GM10248 (cell line): ENCODE measurements at regions of chr10 and their contacts with region 1.

Region 1: DNA sequence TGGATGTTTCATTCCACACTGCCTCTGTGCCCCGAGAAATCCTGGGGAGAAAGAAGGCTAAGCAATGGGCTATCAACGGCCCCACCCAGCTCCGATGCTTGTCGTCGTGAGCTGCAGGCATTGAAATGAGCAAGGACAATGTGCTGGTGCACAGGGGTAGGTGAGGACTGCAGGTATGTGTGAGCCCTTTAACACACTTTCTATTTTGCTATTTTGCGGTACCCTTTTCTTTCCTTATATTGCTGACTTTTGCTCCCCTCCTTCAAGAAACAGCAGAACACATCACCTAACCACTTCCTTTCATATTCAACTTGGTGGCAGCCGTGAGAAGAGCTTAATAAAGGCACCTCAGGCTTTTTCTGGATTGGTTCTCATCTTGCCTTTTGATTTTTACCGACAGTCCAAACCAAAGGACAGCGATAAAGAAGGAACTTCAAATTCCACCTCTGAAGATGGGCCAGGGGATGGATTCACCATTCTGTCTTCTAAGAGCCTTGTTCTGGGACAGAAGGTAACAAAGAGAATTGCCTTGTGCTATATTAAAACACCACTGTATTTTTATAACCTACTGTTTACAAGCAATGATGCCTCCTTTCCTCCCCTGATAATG is 39.2 kb downstream of the AIFM2 start:
- DNase-seq: no peak
- CTCF ChIP-seq: no peak

Region 2: DNA sequence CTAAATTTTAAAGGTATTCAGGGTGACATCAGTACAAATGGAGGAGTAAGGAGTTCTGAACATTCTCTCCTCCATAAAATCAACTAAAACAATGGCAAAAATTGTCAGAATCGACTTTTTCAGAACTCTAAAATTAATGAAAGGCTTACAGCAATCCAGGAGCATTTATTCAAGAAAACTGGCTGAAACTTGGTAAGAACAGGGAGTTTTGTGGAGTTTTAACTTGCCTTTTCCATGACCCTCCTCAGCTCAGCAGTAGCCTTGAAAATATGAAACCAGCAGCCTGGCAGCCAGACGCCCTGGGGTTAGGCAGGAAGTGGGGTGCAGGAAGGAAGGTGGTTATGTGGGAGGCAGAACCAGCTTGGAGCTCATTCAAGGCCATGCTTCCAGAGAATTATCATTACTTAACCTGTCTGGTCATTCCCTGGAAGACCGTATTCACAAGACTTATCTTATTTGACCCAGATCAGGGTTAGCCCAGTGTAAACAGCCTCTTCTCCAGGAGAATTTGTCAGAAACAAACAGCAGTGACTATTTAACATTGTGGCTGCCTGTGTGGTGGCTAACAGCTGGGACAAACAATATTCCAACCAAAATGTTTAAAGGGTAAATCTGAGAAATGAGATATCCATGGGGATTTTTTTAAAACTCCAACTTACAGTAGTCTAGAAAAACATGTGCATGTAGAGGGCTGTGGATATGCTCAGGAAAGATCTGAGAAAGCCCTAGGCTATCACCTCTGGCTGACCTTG is 116.5 kb before region 1 on chr10:
- CTCF ChIA-PET with region 1: no interaction called
- POLR2A ChIA-PET with region 1: no interaction called
- DNase-seq: no peak
- CTCF ChIP-seq: no peak

Region 3: DNA sequence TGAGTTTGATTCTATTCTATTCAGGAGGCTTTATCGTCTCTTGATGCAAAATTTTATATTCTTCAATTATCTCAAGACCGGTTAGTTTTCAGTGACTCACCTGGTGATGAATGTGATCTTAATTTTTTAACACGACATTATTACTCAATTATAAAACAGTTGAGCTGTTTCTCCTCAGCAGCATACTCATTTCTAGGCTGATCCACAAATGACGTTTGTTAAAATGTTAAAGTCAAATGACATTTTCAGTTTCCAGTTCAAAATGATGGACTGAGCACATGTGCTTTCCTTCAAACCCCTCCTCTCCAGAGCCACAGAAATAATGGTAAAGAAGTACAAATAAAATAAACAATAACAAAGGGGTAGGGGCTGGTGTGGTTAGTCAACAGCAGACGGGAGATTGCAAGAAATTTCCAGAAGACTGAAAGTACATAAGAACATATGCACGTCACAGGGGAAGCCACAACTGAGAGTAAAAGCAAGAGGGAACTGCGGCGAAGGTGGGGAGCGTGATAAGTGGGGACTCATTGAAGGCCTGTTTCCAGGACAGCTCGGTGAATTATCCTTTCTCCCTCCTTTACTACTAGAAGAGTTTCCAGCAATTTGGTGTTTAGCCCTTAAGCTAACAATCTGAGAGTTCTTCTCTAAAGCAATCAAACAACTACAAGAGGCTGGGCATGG is 29.9 kb before region 1 on chr10:
- CTCF ChIA-PET with region 1: no interaction called
- POLR2A ChIA-PET with region 1: no interaction called
- DNase-seq: no peak
- CTCF ChIP-seq: no peak

Region 4: DNA sequence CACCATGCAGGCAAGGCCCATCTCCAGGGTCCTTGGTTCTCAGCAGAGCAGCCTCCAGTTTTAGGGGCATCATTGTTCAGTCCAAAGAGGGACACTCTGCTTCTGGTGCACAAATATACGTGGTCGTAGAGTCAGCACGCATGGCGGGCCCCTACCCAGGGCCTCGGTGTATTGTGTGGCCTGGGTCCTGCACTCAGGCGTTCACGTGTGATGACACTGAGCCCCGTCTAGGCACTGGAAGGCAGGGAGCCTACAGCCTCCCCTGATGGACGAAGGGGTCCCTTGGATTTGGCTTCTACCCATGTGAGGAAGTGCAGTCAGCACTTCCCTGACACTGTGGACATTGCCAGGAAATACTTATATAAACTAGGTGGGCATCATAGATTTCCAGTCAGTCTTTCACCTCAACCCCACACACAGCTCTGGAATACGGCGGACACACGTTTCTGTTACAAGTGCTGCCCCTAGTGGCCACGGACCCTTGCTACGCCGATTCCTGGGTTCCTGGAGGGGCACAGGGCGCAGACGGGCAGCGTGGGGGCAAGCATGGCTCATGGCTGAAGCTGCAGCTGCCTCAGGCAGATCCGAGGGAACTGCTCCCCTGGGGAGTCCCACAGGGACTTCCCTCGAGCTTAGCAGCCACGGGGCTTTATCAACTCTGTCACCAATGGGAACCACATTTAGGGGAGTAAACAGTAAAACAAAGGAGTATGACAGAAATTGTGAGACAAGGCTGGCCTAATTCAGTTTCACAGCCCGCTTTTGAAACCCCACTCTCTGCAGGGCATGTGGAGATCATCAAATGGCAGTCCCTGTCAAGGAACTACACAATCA is 13.7 kb after region 1 on chr10:
- CTCF ChIA-PET with region 1: interaction called, 39 read pairs
- POLR2A ChIA-PET with region 1: no interaction called
- DNase-seq: peak; percentile 69
- CTCF ChIP-seq: peak; percentile 55

Region 5: GRCh38 chr10:70221030-70221429 is 127.6 kb after region 1 on chr10:
- CTCF ChIA-PET with region 1: no interaction called
- POLR2A ChIA-PET with region 1: no interaction called
- DNase-seq: no peak
- CTCF ChIP-seq: no peak